CD4-positive, alpha-beta T cell (primary cell): ENCODE measurements at regions of chr12 and their contacts with region 1.

Region 1: GRCh38 chr12:94133964-94134795 is 14.2 kb upstream of the PLXNC1 start:
- DNase-seq: peak in 6 of 14 experiments; percentile 19 to 79 (median 56)
- ATAC-seq: peak; percentile 99
- H3K4me3 ChIP-seq: no peak overlapping the region
- H3K4me3 Mint-ChIP-seq: no peak overlapping the region
- H3K27ac ChIP-seq: no peak overlapping the region
- H3K27ac Mint-ChIP-seq: no peak overlapping the region
- H3K4me1 ChIP-seq: no peaks in the 10 kb centered on the region
- H3K4me1 Mint-ChIP-seq: peaks cover 6% of the 10 kb centered on the region
- H3K27me3 ChIP-seq: no peaks in the 10 kb centered on the region
- H3K27me3 Mint-ChIP-seq: no peaks in the 10 kb centered on the region
- CTCF ChIP-seq: peak; percentile 82

Region 2: DNA sequence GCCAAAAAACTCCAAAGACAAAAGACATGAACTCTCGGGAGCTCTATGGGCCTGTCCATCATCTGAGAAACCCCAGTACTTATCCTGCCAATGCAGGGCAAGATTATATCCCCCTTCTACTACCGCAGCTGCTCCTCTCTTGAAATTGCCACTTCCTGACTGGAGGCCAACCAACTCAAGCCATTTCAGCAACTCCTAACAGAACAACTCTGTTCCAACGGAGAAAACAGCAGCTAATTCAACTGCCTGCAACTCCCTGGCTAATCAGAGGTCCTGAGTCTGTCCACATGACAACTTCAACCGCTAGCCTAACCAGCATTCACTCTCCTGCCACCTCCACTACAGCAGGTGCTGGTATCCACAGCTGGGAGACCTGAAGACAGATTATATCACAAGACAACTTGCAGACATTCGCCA is 301.3 kb after region 1 on chr12:
- CTCF ChIA-PET with region 1: no interaction called
- POLR2A ChIA-PET with region 1: no interaction called
- intact Hi-C with region 1: loop called in 1 of 2 experiments (anchors 5 kb)
- DNase-seq: no peak
- ATAC-seq: no peak
- H3K4me3 ChIP-seq: no peak overlapping the region
- H3K4me3 Mint-ChIP-seq: no peak overlapping the region
- H3K27ac ChIP-seq: no peak overlapping the region
- H3K27ac Mint-ChIP-seq: no peak overlapping the region
- H3K4me1 ChIP-seq: no peaks in the 10 kb centered on the region
- H3K4me1 Mint-ChIP-seq: peaks cover 18% of the 10 kb centered on the region
- H3K27me3 ChIP-seq: no peaks in the 10 kb centered on the region
- H3K27me3 Mint-ChIP-seq: no peaks in the 10 kb centered on the region
- CTCF ChIP-seq: no peak

Region 3: DNA sequence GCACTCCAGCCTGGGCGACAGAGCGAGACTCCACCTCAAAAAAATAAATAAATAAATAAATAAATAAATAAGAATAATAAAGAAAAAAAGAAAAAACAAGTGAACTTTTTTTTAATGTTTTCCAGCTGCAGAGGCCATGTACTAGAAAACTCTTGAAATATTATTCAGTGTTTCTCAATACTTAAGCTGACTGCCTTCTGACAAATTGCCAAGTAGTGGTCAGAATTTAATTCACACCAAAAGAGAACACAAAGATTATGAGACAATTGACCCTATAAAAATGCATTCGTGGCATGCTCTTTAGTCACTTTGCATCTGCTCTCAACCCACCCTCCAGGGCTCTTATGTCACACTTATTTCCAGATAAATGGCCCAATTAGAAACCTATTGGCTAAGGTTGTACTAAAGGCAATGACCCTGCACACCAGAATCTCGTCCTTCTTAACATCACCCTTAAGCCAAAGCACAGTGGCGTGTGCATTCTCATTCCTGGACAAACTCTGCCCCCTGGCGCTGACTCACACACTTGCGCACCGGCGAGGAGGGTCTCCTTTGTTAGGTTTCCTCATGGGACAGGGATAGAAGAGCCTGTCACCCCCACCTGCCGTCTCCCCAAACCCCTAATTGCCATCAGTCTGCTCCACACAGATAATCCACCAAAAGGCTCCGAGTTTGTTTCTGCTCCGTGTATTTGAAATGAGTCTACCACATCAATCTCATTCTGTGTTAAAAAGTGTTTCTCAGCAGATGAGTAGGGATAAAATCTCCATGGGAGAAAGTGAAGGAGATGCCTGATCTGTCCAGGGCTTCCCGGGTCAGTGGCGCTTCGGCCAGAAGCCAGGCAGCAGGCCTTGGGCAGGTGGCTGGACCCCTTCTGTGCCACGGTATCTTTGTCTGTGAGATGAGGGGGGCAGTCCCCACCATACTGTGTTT is 398.6 kb after region 1 on chr12:
- CTCF ChIA-PET with region 1: no interaction called
- POLR2A ChIA-PET with region 1: no interaction called
- intact Hi-C with region 1: loop called (anchors 1 to 2 kb)
- DNase-seq: peak; percentile 41 to 79 (median 60)
- ATAC-seq: peak; percentile 60
- H3K4me3 ChIP-seq: no peak overlapping the region
- H3K4me3 Mint-ChIP-seq: no peak overlapping the region
- H3K27ac ChIP-seq: no peak overlapping the region
- H3K27ac Mint-ChIP-seq: no peak overlapping the region
- H3K4me1 ChIP-seq: peaks cover 6% of the 10 kb centered on the region
- H3K4me1 Mint-ChIP-seq: no peaks in the 10 kb centered on the region
- H3K27me3 ChIP-seq: no peaks in the 10 kb centered on the region
- H3K27me3 Mint-ChIP-seq: peaks cover 11% of the 10 kb centered on the region
- CTCF ChIP-seq: peak; percentile 69

Region 4: GRCh38 chr12:94640134-94640928 is 506.2 kb after region 1 on chr12:
- CTCF ChIA-PET with region 1: no interaction called
- POLR2A ChIA-PET with region 1: no interaction called
- intact Hi-C with region 1: no loop called
- DNase-seq: peak in 4 of 14 experiments; percentile 32 to 76 (median 66)
- ATAC-seq: peak; percentile 56
- H3K4me3 ChIP-seq: no peak overlapping the region
- H3K4me3 Mint-ChIP-seq: no peak overlapping the region
- H3K27ac ChIP-seq: no peak overlapping the region
- H3K27ac Mint-ChIP-seq: no peak overlapping the region
- H3K4me1 ChIP-seq: peaks cover 17% of the 10 kb centered on the region
- H3K4me1 Mint-ChIP-seq: peaks cover 15% of the 10 kb centered on the region
- H3K27me3 ChIP-seq: no peaks in the 10 kb centered on the region
- H3K27me3 Mint-ChIP-seq: peaks cover 16% of the 10 kb centered on the region
- CTCF ChIP-seq: no peak

Region 5: GRCh38 chr12:94980577-94980976 is 846.4 kb after region 1 on chr12:
- CTCF ChIA-PET with region 1: no interaction called
- POLR2A ChIA-PET with region 1: no interaction called
- intact Hi-C with region 1: loop called in 1 of 2 experiments (anchors 1 kb)
- DNase-seq: peak in 3 of 14 experiments; percentile 35 to 65 (median 61)
- ATAC-seq: peak; percentile 87
- H3K4me3 ChIP-seq: no peak overlapping the region
- H3K4me3 Mint-ChIP-seq: peak overlapping the region; percentile 49
- H3K27ac ChIP-seq: no peak overlapping the region
- H3K27ac Mint-ChIP-seq: peak overlapping the region; percentile 84
- H3K4me1 ChIP-seq: peaks cover 44% of the 10 kb centered on the region
- H3K4me1 Mint-ChIP-seq: peaks cover 62% of the 10 kb centered on the region
- H3K27me3 ChIP-seq: no peaks in the 10 kb centered on the region
- H3K27me3 Mint-ChIP-seq: no peaks in the 10 kb centered on the region
- CTCF ChIP-seq: peak; percentile 50